CD4-positive, alpha-beta T cell (primary cell): ENCODE measurements at regions of chr16 and their contacts with region 1.

Region 1: GRCh38 chr16:57141822-57142631 is 43.8 kb downstream of the PSME3IP1 start:
- DNase-seq: peak in 7 of 14 experiments; percentile 21 to 54 (median 29)
- ATAC-seq: peak; percentile 92
- H3K4me3 ChIP-seq: no peak overlapping the region
- H3K4me3 Mint-ChIP-seq: peak overlapping the region; percentile 54
- H3K27ac ChIP-seq: peak overlapping the region; percentile 51 to 68
- H3K27ac Mint-ChIP-seq: peak overlapping the region; percentile 90
- H3K4me1 ChIP-seq: peaks cover 60% of the 10 kb centered on the region
- H3K4me1 Mint-ChIP-seq: peaks cover 63% of the 10 kb centered on the region
- H3K27me3 ChIP-seq: no peaks in the 10 kb centered on the region
- H3K27me3 Mint-ChIP-seq: no peaks in the 10 kb centered on the region
- CTCF ChIP-seq: no peak

Region 2: GRCh38 chr16:57039148-57039812 is 102.7 kb before region 1 on chr16:
- CTCF ChIA-PET with region 1: no interaction called
- POLR2A ChIA-PET with region 1: no interaction called
- intact Hi-C with region 1: loop called in 1 of 2 experiments (anchors 5 kb)
- DNase-seq: peak in 5 of 14 experiments; percentile 11 to 68 (median 41)
- ATAC-seq: peak; percentile 7
- H3K4me3 ChIP-seq: no peak overlapping the region
- H3K4me3 Mint-ChIP-seq: peak overlapping the region; percentile 79
- H3K27ac ChIP-seq: peak overlapping the region; percentile 81 to 88
- H3K27ac Mint-ChIP-seq: peak overlapping the region; percentile 94
- H3K4me1 ChIP-seq: peaks cover 98% of the 10 kb centered on the region
- H3K4me1 Mint-ChIP-seq: peaks cover 91% of the 10 kb centered on the region
- H3K27me3 ChIP-seq: no peaks in the 10 kb centered on the region
- H3K27me3 Mint-ChIP-seq: no peaks in the 10 kb centered on the region
- CTCF ChIP-seq: no peak